GM12878 (cell line): ENCODE measurements at regions of chr6 and their contacts with region 1.

Region 1: GRCh38 chr6:44446628-44447306 is 59.3 kb downstream of the CDC5L start:
- DNase-seq: no peak
- ATAC-seq: no peak
- H3K4me3 ChIP-seq: no peak overlapping the region
- H3K27ac ChIP-seq: no peak overlapping the region
- H3K4me1 ChIP-seq: no peaks in the 10 kb centered on the region
- H3K27me3 ChIP-seq: no peaks in the 10 kb centered on the region
- CTCF ChIP-seq: no peak
- EP300 ChIP-seq: no peak
- POLR2A ChIP-seq: no peak
- RAD21 ChIP-seq: no peak

Region 2: GRCh38 chr6:44431118-44431725 is 15.5 kb before region 1 on chr6:
- CTCF ChIA-PET with region 1: interaction called, 22 read pairs
- POLR2A ChIA-PET with region 1: no interaction called
- RAD21 ChIA-PET with region 1: no interaction called
- SMC1A ChIA-PET with region 1: interaction called, 3 read pairs
- in situ Hi-C with region 1: no loop called
- intact Hi-C with region 1: no loop called
- DNase-seq: peak; percentile 3
- ATAC-seq: peak; percentile 93
- H3K4me3 ChIP-seq: no peak overlapping the region
- H3K27ac ChIP-seq: no peak overlapping the region; the same call in 1 of the 2 replicates
- H3K4me1 ChIP-seq: no peaks in the 10 kb centered on the region
- H3K27me3 ChIP-seq: no peaks in the 10 kb centered on the region
- CTCF ChIP-seq: peak; percentile 61 to 79 (median 62); a peak in 5 of 6 replicates
- EP300 ChIP-seq: no peak
- POLR2A ChIP-seq: no peak
- RAD21 ChIP-seq: peak; percentile 68

Region 3: DNA sequence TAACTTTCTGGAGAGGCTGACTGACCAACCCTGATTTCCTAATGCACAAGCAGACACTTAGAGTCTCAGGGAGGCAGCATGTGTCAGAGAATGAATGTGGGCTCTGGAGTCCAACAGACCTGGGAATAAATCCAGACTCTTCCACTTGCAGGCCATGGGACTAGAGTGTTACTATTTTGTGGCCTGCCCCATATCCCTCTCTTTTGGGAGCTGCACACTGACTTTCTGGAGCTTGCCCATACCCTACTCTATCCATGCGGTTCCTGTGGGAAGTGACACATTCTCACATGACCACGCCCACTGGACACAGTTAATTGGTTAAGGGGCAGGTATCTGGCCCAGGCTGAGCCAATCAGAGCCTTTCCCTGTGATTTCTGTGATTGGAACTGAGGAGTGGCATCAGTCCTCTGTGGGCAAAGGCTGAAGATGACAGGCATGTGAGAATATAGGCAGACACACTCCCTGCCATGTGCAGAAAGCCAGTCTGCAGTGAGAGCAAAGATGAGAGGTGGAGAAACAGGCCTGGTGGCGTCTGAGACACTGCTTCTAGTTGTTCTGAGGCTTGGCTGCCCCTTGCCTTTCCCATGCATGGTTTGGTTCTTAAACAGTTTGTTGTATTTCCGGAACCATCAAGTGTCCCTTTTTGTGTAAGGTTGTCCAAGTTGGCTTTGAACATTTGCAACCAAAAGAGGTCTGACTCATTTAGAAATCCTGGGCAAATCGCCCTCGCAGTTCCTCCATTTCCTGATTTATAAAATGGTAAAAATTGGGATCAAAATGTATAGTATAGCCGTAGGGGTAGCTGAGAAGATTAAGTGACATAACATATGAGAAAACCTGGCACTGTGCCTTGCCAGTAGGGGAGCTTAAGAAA is 66.3 kb after region 1 on chr6:
- CTCF ChIA-PET with region 1: no interaction called
- POLR2A ChIA-PET with region 1: no interaction called
- RAD21 ChIA-PET with region 1: no interaction called
- SMC1A ChIA-PET with region 1: no interaction called
- in situ Hi-C with region 1: no loop called
- intact Hi-C with region 1: no loop called
- DNase-seq: no peak
- ATAC-seq: no peak; the same call in 2 of the 3 replicates
- H3K4me3 ChIP-seq: no peak overlapping the region
- H3K27ac ChIP-seq: no peak overlapping the region
- H3K4me1 ChIP-seq: no peaks in the 10 kb centered on the region
- H3K27me3 ChIP-seq: no peaks in the 10 kb centered on the region
- CTCF ChIP-seq: no peak
- EP300 ChIP-seq: no peak
- POLR2A ChIP-seq: no peak
- RAD21 ChIP-seq: no peak